MCF 10A (cell line): ENCODE measurements at regions of chr1 and their contacts with region 1.

Region 1: DNA sequence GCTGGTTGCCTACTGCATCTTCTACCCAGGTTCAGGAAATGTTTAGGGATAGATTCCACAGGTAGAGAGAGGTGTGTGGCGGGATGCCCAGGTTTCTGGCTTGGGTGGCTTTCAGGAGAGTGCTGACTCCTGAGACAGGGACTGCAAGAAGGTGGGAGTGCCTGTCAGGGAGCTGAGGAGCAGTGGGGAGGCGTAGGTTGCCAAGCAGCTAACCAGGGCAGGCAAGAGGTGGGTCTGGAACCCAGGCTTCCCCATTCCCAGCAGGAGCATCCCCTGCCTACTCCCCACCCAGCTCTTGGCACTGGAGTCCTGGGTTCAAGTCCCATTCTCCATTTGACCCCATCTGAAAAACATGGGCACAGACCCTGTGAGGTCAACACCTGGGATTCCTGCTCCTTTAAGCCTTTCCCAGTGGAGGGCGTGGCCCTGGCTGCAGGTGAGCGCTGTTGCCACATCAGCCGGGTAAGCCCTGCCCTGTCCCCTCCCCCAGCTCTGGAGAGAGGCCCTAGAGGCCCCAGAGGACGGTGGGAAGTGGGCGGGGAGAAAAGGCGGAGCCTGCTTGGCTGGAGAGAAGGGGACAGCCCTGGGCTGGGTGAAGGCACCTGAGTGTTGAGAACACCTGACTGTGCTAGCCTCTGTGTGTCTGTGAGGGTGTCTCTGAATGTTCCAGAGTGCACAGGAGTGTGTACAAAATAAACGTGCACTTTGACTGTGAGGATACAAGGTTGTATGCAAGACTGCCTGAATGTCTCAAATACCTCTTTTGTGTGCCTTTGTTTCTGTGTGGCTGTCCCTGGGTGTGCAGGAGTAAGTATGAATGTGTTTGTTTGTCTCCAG is 14.0 kb upstream of the SYNC start:
- DNase-seq: peak; percentile 96
- H3K4me3 Mint-ChIP-seq: peak overlapping the region; percentile 38
- H3K27ac Mint-ChIP-seq: peak overlapping the region; percentile 70
- H3K4me1 Mint-ChIP-seq: peaks cover 19% of the 10 kb centered on the region
- H3K27me3 Mint-ChIP-seq: no peaks in the 10 kb centered on the region
- CTCF ChIP-seq: no peak

Region 2: DNA sequence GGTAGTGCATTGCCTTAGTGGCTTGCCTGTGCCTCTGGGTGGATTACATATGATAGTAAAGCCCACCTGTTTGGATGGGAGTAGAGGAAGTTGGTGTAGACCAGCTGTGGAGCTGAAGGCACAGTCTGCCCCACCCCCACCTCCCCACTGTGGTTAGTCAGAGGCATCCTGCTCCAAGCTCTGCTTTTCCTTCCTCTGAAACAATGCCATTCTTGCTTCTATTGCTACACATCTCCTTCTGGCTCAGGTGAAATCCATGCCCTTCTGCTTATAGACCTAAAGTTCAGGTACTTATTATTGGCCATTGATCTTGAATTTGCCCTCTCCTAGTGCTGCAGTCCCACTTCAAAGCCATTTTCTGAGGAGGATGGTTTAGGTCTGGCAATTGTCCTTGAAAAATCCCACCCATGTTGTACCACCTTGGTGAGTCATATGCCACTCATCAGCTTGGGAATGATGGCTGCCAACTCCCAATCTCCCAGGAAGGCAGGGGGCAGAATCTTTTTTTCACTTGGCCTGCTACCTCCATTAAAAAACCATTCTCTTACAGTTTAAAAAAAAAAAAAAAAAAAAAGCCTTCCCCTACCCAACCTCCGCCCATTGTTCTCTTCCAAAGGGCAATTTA is 543.8 kb before region 1 on chr1:
- CTCF ChIA-PET with region 1: no interaction called
- POLR2A ChIA-PET with region 1: no interaction called
- intact Hi-C with region 1: no loop called
- DNase-seq: peak; percentile 68
- H3K4me3 Mint-ChIP-seq: no peak overlapping the region
- H3K27ac Mint-ChIP-seq: no peak overlapping the region
- H3K4me1 Mint-ChIP-seq: peaks cover 9% of the 10 kb centered on the region
- H3K27me3 Mint-ChIP-seq: no peaks in the 10 kb centered on the region
- CTCF ChIP-seq: no peak

Region 3: GRCh38 chr1:32400876-32401631 is 315.5 kb before region 1 on chr1:
- CTCF ChIA-PET with region 1: interaction called, 11 read pairs
- POLR2A ChIA-PET with region 1: no interaction called
- intact Hi-C with region 1: no loop called
- DNase-seq: peak; percentile 90
- H3K4me3 Mint-ChIP-seq: no peak overlapping the region
- H3K27ac Mint-ChIP-seq: peak overlapping the region; percentile 67
- H3K4me1 Mint-ChIP-seq: peaks cover 6% of the 10 kb centered on the region
- H3K27me3 Mint-ChIP-seq: no peaks in the 10 kb centered on the region
- CTCF ChIP-seq: peak; percentile 86

Region 4: DNA sequence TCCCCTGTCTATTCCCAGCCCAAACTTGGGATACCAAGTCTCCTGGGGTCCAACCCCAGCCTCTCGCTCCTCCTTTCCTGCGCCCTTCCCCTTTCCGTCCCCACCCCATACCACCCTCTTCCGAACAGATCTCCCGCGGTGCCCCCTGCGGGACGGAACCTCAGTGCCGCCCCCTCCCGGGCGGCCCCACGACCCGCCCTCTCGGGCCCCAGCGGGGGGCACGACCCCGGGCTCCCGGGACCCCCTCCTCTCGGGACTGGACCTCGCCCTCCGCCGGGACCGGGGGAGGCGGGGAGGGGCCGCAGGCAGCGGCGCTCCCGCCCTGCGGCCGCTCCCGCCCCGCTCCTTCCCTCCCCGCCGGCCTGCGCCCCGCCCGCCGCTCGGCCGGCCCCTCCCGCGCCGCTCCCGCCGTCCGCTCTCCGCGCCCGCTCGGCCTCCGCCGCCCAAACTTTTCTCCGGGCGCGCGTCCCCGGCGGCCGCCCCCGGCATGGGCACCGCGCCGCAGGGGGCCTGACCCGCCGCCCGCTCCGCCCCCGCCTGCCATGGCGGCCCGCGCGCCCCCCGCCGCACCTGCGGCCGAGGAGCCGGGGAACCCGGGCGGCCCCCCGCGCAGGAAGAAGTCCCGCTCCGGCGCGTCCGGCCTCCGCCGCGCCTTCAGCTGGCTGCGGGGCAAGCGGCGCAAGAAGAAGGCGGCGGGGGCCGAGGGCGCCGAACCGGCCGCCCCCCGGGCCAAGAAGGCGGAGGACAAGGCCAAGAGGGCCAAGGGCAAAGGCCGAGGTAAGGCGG is 25.1 kb after region 1 on chr1:
- CTCF ChIA-PET with region 1: interaction called, 14 read pairs
- POLR2A ChIA-PET with region 1: interaction called, 14 read pairs
- intact Hi-C with region 1: no loop called
- DNase-seq: no peak
- H3K4me3 Mint-ChIP-seq: peak overlapping the region; percentile 75
- H3K27ac Mint-ChIP-seq: peak overlapping the region; percentile 63
- H3K4me1 Mint-ChIP-seq: peaks cover 27% of the 10 kb centered on the region
- H3K27me3 Mint-ChIP-seq: no peaks in the 10 kb centered on the region
- CTCF ChIP-seq: peak; percentile 59

Region 5: DNA sequence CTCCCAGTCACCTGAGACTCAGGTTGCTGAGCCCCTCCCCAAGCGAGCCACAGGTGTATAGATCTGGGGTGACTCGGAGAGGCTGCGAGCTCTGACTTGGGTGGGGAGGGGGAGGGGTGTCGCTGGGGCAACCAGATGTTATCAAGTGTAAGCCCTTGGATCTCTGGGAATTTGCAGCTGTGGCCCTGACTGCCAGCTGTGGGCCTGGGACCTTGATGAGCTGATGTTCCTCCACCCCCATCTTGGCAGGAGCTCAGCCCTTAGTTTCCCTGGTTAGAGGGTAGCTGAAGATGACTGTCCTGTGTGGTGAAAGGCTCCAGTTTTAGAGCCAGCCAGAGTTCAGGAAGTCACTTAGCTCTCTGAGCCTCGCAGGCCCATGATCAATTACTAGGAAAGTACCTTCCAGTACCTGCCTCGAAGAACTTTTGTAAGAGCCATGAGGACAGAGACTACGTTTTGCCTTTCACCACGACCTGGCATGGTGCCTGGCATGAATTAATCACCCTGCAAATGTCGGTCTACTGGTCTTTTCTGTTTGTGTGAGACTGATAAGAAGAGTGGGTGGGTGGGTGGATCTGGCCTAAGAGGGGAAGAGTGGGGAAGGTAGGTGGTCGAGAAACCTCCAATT is 44.8 kb after region 1 on chr1:
- CTCF ChIA-PET with region 1: interaction called, 418 read pairs
- POLR2A ChIA-PET with region 1: interaction called, 70 read pairs
- intact Hi-C with region 1: no loop called
- DNase-seq: peak; percentile 96
- H3K4me3 Mint-ChIP-seq: peak overlapping the region; percentile 72
- H3K27ac Mint-ChIP-seq: peak overlapping the region; percentile 97
- H3K4me1 Mint-ChIP-seq: peaks cover 51% of the 10 kb centered on the region
- H3K27me3 Mint-ChIP-seq: no peaks in the 10 kb centered on the region
- CTCF ChIP-seq: no peak

Region 6: GRCh38 chr1:32876341-32877210 is 160.0 kb after region 1 on chr1:
- CTCF ChIA-PET with region 1: interaction called, 24 read pairs
- POLR2A ChIA-PET with region 1: interaction called, 5 read pairs
- intact Hi-C with region 1: loop called (anchors 2 kb)
- DNase-seq: peak; percentile 58
- H3K4me3 Mint-ChIP-seq: no peak overlapping the region
- H3K27ac Mint-ChIP-seq: no peak overlapping the region
- H3K4me1 Mint-ChIP-seq: peaks cover 7% of the 10 kb centered on the region
- H3K27me3 Mint-ChIP-seq: peaks cover 10% of the 10 kb centered on the region
- CTCF ChIP-seq: peak; percentile 86